ENCODE measurements at regions of chr22 and their contacts with region 1.

Region 1: DNA sequence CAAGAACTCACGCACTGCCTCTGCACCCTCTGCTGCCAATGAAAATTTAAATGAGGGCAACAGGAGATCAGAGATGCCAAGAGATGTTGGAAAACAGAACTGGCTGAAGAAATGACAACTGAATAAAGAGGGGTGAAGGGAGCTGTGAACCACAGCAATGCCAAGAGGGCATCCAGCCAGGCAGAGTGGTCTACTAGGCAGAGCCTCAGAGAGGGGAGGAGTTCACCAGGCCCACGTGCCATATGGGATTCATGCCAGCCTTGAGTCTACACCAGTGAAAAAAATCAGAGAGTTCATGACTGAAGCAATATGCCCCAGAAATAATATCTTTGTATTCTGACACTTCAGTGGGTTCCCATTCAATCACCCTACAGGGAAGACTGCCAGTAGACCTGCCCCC is 4.4 kb downstream of the APOL2 start:
- DNase-seq: peak in 2 of 7 donors; percentile 23 to 50
- H3K4me3 ChIP-seq: no peak overlapping the region
- H3K27ac ChIP-seq: no peak overlapping the region
- H3K4me1 ChIP-seq: peaks cover 19 to 35% of the 10 kb centered on the region in 2 donors
- H3K27me3 ChIP-seq: no peaks in the 10 kb centered on the region
- CTCF ChIP-seq: no peak
- POLR2A ChIP-seq: no peak

Region 2: DNA sequence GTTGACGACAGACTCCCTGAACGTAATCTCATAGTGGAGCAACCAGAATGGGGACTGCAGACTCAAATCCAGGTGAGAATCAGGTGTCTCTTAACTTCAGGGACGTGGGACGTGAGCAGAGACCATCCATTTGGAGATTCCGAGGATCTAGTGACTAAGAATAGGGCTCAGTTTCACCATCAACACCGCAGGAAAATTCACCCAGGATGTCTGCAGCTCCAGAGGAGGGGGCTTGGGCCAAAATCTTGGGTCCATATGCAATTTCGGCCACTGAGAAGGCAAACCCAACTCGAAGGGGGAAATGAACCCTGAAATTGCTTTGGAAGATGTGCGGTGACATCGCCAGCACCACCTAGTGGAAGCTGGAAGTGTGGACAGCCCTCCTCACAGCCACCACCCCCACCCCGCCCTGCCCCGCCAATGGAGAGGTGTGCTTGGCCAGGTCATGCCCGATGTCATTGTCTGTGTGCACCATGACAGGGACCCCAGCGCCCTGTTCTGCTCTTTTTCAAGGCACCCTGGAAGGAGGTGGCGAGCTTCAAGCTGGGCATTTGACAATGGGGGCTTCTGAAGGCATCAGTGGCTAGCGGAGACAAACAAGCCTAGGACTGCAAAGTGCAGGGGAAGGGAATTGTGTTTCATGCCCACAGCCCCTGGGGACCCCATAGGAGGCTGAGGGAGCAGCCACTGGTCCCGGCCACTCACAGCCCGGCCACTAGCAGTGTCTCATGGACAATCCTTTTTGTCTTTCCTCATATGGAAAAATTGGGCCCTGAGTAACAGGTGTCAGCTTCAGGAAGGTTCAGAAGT is 42.8 kb after region 1 on chr22:
- intact Hi-C with region 1: loop called in 1 of 2 experiments (anchors 5 kb)
- DNase-seq: peak; percentile 39 to 81 (median 65)
- H3K4me3 ChIP-seq: no peak overlapping the region
- H3K27ac ChIP-seq: no peak overlapping the region
- H3K4me1 ChIP-seq: peaks cover 0 to 8% of the 10 kb centered on the region in 2 donors
- H3K27me3 ChIP-seq: no peaks in the 10 kb centered on the region
- CTCF ChIP-seq: peak; percentile 57 to 76 (median 66)
- POLR2A ChIP-seq: no peak

Measured in adrenal gland (tissue), 19 donors.